ENCODE measurements at regions of chr19 and their contacts with region 1.

Region 1: GRCh38 chr19:55117636-55118391 is at the start of gene PPP1R12C:
- DNase-seq: peak; percentile 98 to 100 (median 99)
- H3K4me3 ChIP-seq: peak within 1 kb of the TSS; percentile 58 to 93 (median 84)
- H3K27ac ChIP-seq: peak within 1 kb of the TSS in 57 of 59 donors; percentile 12 to 92 (median 82)
- H3K27me3 ChIP-seq: no peaks in the 10 kb centered on the region
- CTCF ChIP-seq: peak in 44 of 56 donors; percentile 11 to 68 (median 39)
- total RNA-seq, gene PPP1R12C: 105 to 212 (median 148) TPM

Region 2: DNA sequence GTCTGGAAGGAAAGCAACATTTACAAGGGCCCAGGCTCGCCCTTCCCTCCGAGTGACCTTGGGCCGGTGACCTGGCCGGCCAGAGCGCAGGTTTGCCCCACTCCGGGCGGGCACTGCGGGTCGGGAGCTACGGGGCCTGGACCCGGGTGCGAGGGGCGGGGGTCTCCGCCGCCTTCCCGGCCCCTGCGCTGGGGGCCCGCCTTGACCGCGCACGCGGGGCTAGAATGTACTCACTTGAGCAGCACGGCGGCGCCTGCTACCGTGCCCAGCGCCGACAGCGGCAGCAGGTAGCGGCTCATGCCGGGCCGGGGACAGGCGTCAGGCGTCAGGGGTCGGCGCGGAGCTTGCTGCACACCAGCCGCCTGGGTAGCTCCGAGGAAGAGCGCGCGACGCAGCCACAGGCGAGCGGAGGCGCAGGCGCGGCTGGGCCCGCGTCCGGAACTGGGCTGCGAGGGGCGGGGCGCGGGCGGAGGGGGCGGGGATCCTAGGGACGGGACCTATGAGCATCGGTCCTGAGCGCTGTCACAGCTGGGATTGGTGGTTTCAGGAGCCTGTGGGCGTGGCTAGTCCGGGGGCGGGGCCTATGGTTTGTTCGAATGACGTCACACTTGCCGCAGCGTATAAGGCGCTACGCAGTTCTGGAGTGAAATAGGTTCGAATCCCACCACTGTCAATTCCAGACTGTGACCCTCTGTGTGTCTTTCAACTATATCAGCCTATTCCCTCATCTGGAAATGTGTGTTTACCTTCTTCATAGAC is 54.9 kb before region 1 on chr19 and contains the start of gene RDH13:
- intact Hi-C with region 1: loop called in 1 of 2 experiments (anchors 2 kb)
- DNase-seq: peak; percentile 74 to 96 (median 93)
- H3K4me3 ChIP-seq: peak within 1 kb of the TSS; percentile 48 to 99 (median 81)
- H3K27ac ChIP-seq: peak within 1 kb of the TSS in 42 of 59 donors; percentile 1 to 88 (median 66)
- H3K27me3 ChIP-seq: peaks cover 0 to 9% (median 0%) of the 10 kb centered on the region in 45 donors
- CTCF ChIP-seq: peak in 6 of 56 donors; percentile 9 to 31 (median 13)
- total RNA-seq, gene RDH13: 13.6 to 43.3 (median 26.4) TPM

Region 3: GRCh38 chr19:55653758-55654539 is 536.1 kb after region 1 on chr19:
- intact Hi-C with region 1: loop called in 1 of 2 experiments (anchors 5 kb)
- DNase-seq: peak; percentile 96 to 99 (median 98)
- H3K4me3 ChIP-seq: peak overlapping the region; percentile 55 to 100 (median 95)
- H3K27ac ChIP-seq: peak overlapping the region; percentile 95 to 100 (median 99)
- H3K27me3 ChIP-seq: no peaks in the 10 kb centered on the region
- CTCF ChIP-seq: peak; percentile 93 to 100 (median 99)

Region 4: DNA sequence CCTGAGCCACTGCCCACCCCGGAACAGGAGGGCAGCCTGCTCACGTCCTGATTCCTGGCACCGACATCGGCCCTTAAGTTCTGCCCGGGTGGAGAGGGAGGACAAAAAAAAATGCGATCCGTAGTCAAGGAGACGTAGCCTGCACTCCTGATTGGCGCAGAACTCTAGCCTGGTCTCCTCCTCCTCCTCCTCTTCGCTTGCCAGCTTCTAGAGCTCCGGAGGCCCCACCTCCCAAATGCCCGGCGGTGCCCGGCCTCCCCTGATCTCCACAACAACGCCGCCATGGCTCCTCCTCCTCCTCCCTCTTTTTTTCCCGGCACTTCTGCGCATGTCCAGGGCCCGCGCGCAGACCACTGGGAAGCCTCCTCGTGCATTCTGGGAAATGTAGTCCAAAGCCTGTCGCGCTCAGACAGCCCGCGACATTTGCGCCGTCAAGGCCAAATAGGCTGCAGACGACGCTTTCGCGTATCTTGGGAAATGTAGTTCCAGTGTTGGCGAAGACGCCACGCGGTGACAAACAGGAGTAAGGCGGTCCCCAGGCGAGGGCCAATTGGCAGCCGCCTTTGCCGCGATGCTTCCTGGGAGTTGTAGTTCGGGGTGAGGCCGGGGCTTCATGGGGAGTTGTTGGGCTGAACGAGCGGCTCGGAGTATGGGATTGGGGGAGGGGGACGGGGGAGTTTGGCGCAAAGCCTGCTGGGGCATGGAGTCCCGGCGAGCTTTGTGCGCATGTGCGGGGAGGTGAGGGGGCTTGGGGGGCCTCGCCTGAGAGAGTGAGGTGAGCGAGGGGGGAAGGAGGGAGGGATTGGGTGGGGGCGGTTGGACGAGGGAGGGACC is 1023.0 kb after region 1 on chr19 and contains the start of gene ZNF444:
- intact Hi-C with region 1: loop called in 1 of 2 experiments (anchors 10 kb)
- DNase-seq: peak; percentile 97 to 100 (median 99)
- H3K4me3 ChIP-seq: peak within 1 kb of the TSS; percentile 42 to 98 (median 75)
- H3K27ac ChIP-seq: peak within 1 kb of the TSS; percentile 58 to 96 (median 89)
- H3K27me3 ChIP-seq: no peaks in the 10 kb centered on the region
- CTCF ChIP-seq: peak in 13 of 56 donors; percentile 3 to 32 (median 15)
- total RNA-seq, gene ZNF444: 35.5 to 110 (median 56.7) TPM

Measured in dorsolateral prefrontal cortex (tissue), 120 donors.